CD8-positive, alpha-beta T cell (primary cell): ENCODE measurements at regions of chr2 and their contacts with region 1.

Region 1: DNA sequence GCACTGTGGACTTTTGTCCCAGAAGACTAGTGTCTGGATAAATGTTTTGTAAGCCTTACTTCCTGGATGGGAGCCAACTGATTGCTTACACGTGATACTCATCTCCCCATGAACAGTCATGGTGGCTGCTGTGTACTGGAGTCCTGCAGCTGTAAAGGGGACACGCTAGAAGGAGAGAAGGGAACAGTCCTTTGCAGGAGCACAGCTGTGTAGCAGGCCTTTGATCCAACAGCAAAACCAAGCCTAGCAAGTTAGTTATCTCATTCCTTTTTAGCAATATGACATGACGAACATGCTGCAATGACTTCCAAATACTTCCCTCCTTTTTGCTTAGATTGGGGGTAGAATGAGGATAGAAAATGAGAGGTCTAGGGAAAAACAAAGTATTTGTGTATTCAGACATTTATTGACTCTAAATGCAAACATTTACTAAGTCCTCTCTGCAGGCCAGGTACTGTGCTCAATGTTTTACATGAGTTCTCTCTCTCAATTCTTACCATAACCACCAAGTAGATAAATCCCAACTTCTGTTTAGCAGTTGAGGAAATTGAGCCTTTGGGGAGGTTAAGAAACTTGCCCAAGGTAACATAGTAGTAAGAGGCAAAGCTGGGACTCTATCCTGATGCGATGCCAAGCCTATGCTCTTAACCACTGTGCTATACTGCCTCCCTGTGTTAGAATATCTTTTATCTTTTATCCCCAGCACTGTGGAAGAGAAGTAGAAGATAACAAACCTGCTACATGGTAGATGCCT is 55.4 kb upstream of the CD28 start:
- DNase-seq: peak in 2 of 9 experiments; percentile 19 to 38
- ATAC-seq: no peak
- H3K4me3 ChIP-seq: no peak overlapping the region
- H3K4me3 Mint-ChIP-seq: no peak overlapping the region
- H3K27ac ChIP-seq: no peak overlapping the region
- H3K27ac Mint-ChIP-seq: no peak overlapping the region
- H3K4me1 ChIP-seq: no peaks in the 10 kb centered on the region
- H3K4me1 Mint-ChIP-seq: peaks cover 19% of the 10 kb centered on the region
- H3K27me3 ChIP-seq: no peaks in the 10 kb centered on the region
- H3K27me3 Mint-ChIP-seq: no peaks in the 10 kb centered on the region
- CTCF ChIP-seq: no peak

Region 2: GRCh38 chr2:203484266-203485112 is 166.5 kb before region 1 on chr2:
- CTCF ChIA-PET with region 1: interaction called, 3 read pairs
- POLR2A ChIA-PET with region 1: no interaction called
- intact Hi-C with region 1: loop called in 1 of 2 experiments (anchors 2 kb)
- DNase-seq: peak; percentile 27 to 77 (median 48)
- ATAC-seq: peak; percentile 88
- H3K4me3 ChIP-seq: no peak overlapping the region
- H3K4me3 Mint-ChIP-seq: no peak overlapping the region
- H3K27ac ChIP-seq: no peak overlapping the region
- H3K27ac Mint-ChIP-seq: no peak overlapping the region
- H3K4me1 ChIP-seq: peaks cover 4% of the 10 kb centered on the region
- H3K4me1 Mint-ChIP-seq: peaks cover 7% of the 10 kb centered on the region
- H3K27me3 ChIP-seq: no peaks in the 10 kb centered on the region
- H3K27me3 Mint-ChIP-seq: no peaks in the 10 kb centered on the region
- CTCF ChIP-seq: peak; percentile 83